ENCODE measurements at regions of chr4 and their contacts with region 1.

Region 1: GRCh38 chr4:88514557-88515511 is 8.7 kb downstream of the PYURF start:
- DNase-seq: no peak
- ATAC-seq: no peak
- H3K4me3 Mint-ChIP-seq: no peak overlapping the region
- H3K27ac Mint-ChIP-seq: no peak overlapping the region
- H3K4me1 Mint-ChIP-seq: no peaks in the 10 kb centered on the region
- H3K27me3 Mint-ChIP-seq: no peaks in the 10 kb centered on the region

Region 2: DNA sequence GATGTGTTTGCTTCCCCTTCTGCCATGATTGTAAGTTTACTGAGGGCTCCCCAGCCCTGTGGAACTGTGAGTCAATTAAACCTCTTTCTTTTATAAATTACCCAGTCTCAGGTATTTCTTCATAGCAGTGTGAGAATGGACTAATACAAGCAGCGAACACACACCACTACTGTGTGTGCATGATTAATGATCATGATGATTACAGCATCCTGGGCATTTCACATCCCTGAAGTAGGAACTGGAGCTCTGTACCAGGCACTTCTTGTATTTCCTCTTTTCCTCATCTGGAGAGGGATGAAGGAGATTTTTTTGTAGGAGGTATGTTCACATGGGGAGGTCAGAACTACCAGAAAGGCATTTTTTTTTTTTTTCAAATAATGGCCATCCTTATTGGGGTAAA is 291.3 kb before region 1 on chr4:
- CTCF ChIA-PET with region 1: interaction called, 117 read pairs
- DNase-seq: no peak
- ATAC-seq: no peak
- H3K4me3 Mint-ChIP-seq: no peak overlapping the region
- H3K27ac Mint-ChIP-seq: no peak overlapping the region
- H3K4me1 Mint-ChIP-seq: peaks cover 9% of the 10 kb centered on the region
- H3K27me3 Mint-ChIP-seq: no peaks in the 10 kb centered on the region

Region 3: DNA sequence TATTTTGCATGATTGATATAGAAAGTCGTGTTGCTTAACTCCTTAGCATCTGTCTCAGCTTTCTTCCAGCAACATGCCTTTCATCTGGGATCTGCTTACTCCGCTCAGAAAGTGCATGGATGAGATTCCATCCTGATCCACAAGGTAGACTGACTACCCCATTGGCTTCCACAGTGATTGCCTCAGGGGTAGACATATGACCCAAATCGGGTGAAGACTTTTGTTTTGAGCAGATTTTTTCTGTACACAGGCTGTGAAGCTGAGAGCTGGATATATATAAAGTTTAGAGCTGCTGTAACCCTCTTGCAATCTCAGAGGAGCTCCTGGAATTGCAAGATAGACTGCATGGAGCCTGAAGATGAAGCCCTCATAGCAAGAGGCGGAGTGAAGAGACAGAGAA is 144.9 kb before region 1 on chr4:
- CTCF ChIA-PET with region 1: interaction called, 10 read pairs
- DNase-seq: no peak
- ATAC-seq: no peak
- H3K4me3 Mint-ChIP-seq: no peak overlapping the region
- H3K27ac Mint-ChIP-seq: no peak overlapping the region
- H3K4me1 Mint-ChIP-seq: peaks cover 22% of the 10 kb centered on the region
- H3K27me3 Mint-ChIP-seq: no peaks in the 10 kb centered on the region

Region 4: DNA sequence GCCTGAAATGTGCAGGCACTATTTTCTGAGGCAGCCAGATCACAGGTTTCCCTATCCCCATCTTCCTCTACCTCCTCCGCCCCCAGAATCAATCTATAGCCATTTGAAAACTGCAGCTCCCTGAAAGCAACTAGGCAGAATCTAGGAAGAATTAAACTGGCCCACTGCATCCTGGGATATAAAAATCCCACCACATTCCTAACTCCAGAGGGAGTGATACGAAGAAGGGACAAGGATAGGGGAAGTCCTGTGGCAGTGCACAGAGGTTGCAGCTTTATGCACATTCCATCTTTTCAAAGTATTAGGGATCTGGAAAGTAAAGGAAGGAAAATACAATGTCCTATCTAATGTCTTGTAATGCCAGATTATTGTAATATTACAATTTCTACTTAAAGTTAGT is 59.2 kb after region 1 on chr4:
- CTCF ChIA-PET with region 1: no interaction called
- DNase-seq: no peak
- ATAC-seq: no peak
- H3K4me3 Mint-ChIP-seq: no peak overlapping the region
- H3K27ac Mint-ChIP-seq: no peak overlapping the region
- H3K4me1 Mint-ChIP-seq: no peaks in the 10 kb centered on the region
- H3K27me3 Mint-ChIP-seq: peaks cover 10% of the 10 kb centered on the region

Region 5: GRCh38 chr4:88672987-88673386 is 158.2 kb after region 1 on chr4:
- CTCF ChIA-PET with region 1: no interaction called
- DNase-seq: no peak
- ATAC-seq: peak; percentile 36
- H3K4me3 Mint-ChIP-seq: no peak overlapping the region
- H3K27ac Mint-ChIP-seq: no peak overlapping the region
- H3K4me1 Mint-ChIP-seq: peaks cover 2% of the 10 kb centered on the region
- H3K27me3 Mint-ChIP-seq: no peaks in the 10 kb centered on the region